Right ventricle myocardium inferior (tissue), 1 donor: ENCODE measurements at regions of chr9 and their contacts with region 1.

Region 1: DNA sequence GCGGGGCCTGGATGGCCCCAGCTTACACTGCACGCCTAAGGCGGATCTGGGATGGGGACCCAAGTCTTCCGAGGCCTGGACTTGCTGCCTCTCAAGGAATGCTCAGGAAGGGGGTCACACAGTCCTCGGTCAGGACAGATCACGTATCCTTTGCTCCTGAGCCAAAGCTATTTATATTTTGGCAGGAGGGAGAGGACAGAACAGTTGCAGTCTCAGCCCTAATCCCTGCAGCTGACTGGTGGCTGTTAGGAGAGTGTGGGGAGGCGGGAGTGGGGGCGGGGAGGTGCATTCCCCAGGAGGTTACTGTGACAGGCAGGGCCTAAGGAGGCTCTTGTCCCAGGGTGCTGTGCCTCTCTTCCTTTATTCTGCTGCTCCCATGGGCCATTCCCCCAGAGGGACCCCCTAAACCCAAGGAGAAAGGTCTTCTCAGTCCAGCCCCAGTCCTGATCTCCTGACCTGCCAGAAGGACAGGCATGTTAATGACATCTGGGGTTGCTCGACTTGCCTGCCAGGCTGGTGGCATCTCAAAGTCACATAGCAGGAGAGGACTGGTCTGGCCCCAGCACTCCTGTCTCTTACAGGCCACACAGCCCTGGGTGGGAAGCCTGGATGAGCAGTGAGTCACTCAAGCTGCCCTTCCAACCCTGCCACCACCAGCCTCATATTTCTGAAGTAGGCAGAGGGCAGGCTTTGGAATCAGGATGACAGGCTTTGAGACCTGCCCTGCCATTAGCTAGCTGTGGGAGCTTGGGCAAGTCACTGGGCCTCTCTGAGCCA is 51.9 kb downstream of the COL27A1 start:
- DNase-seq: no peak
- ATAC-seq: peak; percentile 87

Region 2: GRCh38 chr9:114177423-114178064 is 29.7 kb before region 1 on chr9:
- intact Hi-C with region 1: loop called (anchors 2 kb)
- DNase-seq: no peak
- ATAC-seq: no peak

Region 3: DNA sequence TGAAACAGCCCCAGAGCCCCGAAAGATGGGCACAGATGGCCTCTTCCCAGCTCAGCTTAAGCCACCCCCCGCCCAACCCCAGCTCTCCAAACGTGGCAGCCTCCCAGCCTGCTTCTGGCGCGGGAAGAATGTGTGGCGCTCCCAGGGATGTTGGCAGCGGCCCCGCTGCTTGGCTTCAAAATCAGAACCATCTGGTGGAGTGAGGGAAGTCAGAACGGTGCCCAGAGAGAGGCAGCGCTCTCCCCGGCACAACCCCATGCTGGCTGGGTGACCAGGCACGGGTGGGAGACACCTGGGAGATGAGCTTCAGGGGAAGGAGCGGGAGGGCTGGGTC is 43.0 kb after region 1 on chr9:
- intact Hi-C with region 1: loop called (anchors 2 kb)
- DNase-seq: peak; percentile 91
- ATAC-seq: peak; percentile 85